Naive thymus-derived CD4-positive, alpha-beta T cell (primary cell): ENCODE measurements at regions of chr6 and their contacts with region 1.

Region 1: GRCh38 chr6:31597006-31597405 is 4.2 kb upstream of the NCR3 start:
- DNase-seq: peak in 7 of 9 donors; percentile 68 to 83 (median 79)
- ATAC-seq: peak; percentile 89
- H3K4me3 ChIP-seq: no peak overlapping the region
- H3K4me3 Mint-ChIP-seq: peak overlapping the region in 9 of 10 donors; percentile 38 to 68 (median 55)
- H3K27ac ChIP-seq: peak overlapping the region; percentile 47
- H3K27ac Mint-ChIP-seq: peak overlapping the region; percentile 52 to 95 (median 81)
- H3K4me1 ChIP-seq: peaks cover 34 to 44% of the 10 kb centered on the region in 2 donors
- H3K4me1 Mint-ChIP-seq: peaks cover 34 to 60% (median 55%) of the 10 kb centered on the region in 7 donors
- H3K27me3 ChIP-seq: no peaks in the 10 kb centered on the region
- H3K27me3 Mint-ChIP-seq: no peaks in the 10 kb centered on the region

Region 2: GRCh38 chr6:31396422-31397152 is 200.4 kb before region 1 on chr6:
- CTCF ChIA-PET with region 1: no interaction called
- POLR2A ChIA-PET with region 1: no interaction called
- intact Hi-C with region 1: loop called (anchors 2 to 5 kb)
- DNase-seq: peak; percentile 70 to 90 (median 84)
- ATAC-seq: peak; percentile 87
- H3K4me3 ChIP-seq: no peak overlapping the region
- H3K4me3 Mint-ChIP-seq: peak overlapping the region in 9 of 10 donors; percentile 32 to 86 (median 61)
- H3K27ac ChIP-seq: no peak overlapping the region
- H3K27ac Mint-ChIP-seq: peak overlapping the region in 6 of 9 donors; percentile 19 to 74 (median 42)
- H3K4me1 ChIP-seq: peaks cover 2 to 11% of the 10 kb centered on the region in 2 donors
- H3K4me1 Mint-ChIP-seq: peaks cover 21 to 45% (median 41%) of the 10 kb centered on the region in 7 donors
- H3K27me3 ChIP-seq: no peaks in the 10 kb centered on the region
- H3K27me3 Mint-ChIP-seq: peaks cover 0 to 4% (median 0%) of the 10 kb centered on the region in 5 donors

Region 3: GRCh38 chr6:31493875-31494694 is 102.9 kb before region 1 on chr6:
- CTCF ChIA-PET with region 1: interaction called, 35 read pairs
- POLR2A ChIA-PET with region 1: interaction called, 6 read pairs
- intact Hi-C with region 1: loop called (anchors 1 to 2 kb)
- DNase-seq: peak; percentile 33 to 78 (median 62)
- ATAC-seq: peak; percentile 65
- H3K4me3 ChIP-seq: peak overlapping the region; percentile 87
- H3K4me3 Mint-ChIP-seq: peak overlapping the region; percentile 78 to 93 (median 88)
- H3K27ac ChIP-seq: peak overlapping the region; percentile 81
- H3K27ac Mint-ChIP-seq: peak overlapping the region; percentile 36 to 98 (median 87)
- H3K4me1 ChIP-seq: peaks cover 17 to 24% of the 10 kb centered on the region in 2 donors
- H3K4me1 Mint-ChIP-seq: peaks cover 41 to 61% (median 50%) of the 10 kb centered on the region in 7 donors
- H3K27me3 ChIP-seq: no peaks in the 10 kb centered on the region
- H3K27me3 Mint-ChIP-seq: no peaks in the 10 kb centered on the region

Region 4: GRCh38 chr6:31546962-31547726 is 49.9 kb before region 1 on chr6 and contains the start of gene NFKBIL1:
- CTCF ChIA-PET with region 1: interaction called, 501 read pairs
- POLR2A ChIA-PET with region 1: interaction called, 3,078 read pairs
- intact Hi-C with region 1: loop called (anchors 1 kb)
- DNase-seq: peak; percentile 53 to 90 (median 84)
- ATAC-seq: peak; percentile 91
- H3K4me3 ChIP-seq: peak within 1 kb of the TSS; percentile 68
- H3K4me3 Mint-ChIP-seq: peak within 1 kb of the TSS; percentile 81 to 97 (median 91)
- H3K27ac ChIP-seq: peak within 1 kb of the TSS; percentile 89
- H3K27ac Mint-ChIP-seq: peak within 1 kb of the TSS; percentile 78 to 98 (median 95)
- H3K4me1 ChIP-seq: peaks cover 22 to 31% of the 10 kb centered on the region in 2 donors
- H3K4me1 Mint-ChIP-seq: peaks cover 22 to 57% (median 48%) of the 10 kb centered on the region in 7 donors
- H3K27me3 ChIP-seq: no peaks in the 10 kb centered on the region
- H3K27me3 Mint-ChIP-seq: no peaks in the 10 kb centered on the region
- total RNA-seq, gene NFKBIL1: 8.7 to 17.2 (median 11.6) TPM

Region 5: GRCh38 chr6:31568537-31568961 is 28.5 kb before region 1 on chr6:
- CTCF ChIA-PET with region 1: interaction called, 687 read pairs
- POLR2A ChIA-PET with region 1: interaction called, 3,078 read pairs
- intact Hi-C with region 1: no loop called
- DNase-seq: peak in 7 of 9 donors; percentile 58 to 84 (median 68)
- ATAC-seq: peak; percentile 82
- H3K4me3 ChIP-seq: peak overlapping the region; percentile 23
- H3K4me3 Mint-ChIP-seq: peak overlapping the region; percentile 39 to 77 (median 68)
- H3K27ac ChIP-seq: peak overlapping the region; percentile 77
- H3K27ac Mint-ChIP-seq: peak overlapping the region; percentile 84 to 99 (median 94)
- H3K4me1 ChIP-seq: peaks cover 55 to 58% of the 10 kb centered on the region in 2 donors
- H3K4me1 Mint-ChIP-seq: peaks cover 57 to 88% (median 77%) of the 10 kb centered on the region in 7 donors
- H3K27me3 ChIP-seq: no peaks in the 10 kb centered on the region
- H3K27me3 Mint-ChIP-seq: peaks cover 0 to 41% (median 0%) of the 10 kb centered on the region in 5 donors

Region 6: DNA sequence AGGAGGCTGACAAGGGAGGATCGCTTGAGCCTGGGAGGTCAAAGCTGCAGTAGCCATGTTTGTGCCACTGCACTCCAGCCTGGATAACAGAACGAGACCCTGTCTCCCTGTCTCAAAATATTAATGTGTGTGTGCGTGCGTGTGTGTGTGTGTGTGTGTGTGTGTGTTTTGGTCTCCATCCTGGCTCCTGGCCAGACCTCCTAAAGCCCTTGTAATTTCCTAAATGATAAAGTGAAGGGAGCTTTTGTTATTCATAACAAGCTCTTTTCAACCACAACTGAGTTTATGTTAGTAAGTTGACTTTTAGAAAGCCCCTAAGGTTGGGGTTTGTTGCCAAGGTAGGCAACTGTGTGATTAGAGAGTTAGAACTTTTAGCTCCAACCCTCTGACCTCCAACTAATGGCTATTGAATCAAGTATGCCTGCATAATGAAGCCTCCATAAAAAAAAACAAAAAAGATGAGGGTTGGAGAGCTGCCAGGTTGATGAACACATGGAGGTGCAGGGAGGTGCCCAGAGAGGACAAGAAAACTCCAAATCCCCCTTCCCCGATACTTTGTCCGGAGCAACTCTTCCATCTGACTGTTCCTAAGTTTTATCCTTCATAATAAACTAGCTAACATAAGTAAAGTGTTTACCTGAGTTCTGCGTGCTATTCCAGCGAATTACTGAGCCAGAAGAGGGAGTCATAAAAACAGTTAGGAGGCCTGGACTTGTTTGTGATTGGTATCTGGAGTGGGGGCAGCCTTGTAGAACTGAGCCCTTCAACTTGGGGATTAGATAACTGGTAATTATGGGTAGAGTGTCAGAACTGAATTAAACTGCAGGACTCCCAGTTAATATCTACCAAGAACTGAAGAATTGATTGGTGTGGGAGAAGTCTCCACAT is 12.8 kb after region 1 on chr6:
- CTCF ChIA-PET with region 1: interaction called, 26 read pairs
- POLR2A ChIA-PET with region 1: interaction called, 26 read pairs
- intact Hi-C with region 1: no loop called
- DNase-seq: no peak
- ATAC-seq: no peak
- H3K4me3 ChIP-seq: no peak overlapping the region
- H3K4me3 Mint-ChIP-seq: no peak overlapping the region
- H3K27ac ChIP-seq: no peak overlapping the region
- H3K27ac Mint-ChIP-seq: peak overlapping the region in 2 of 9 donors; percentile 41 to 45
- H3K4me1 ChIP-seq: peaks cover 0 to under 1% of the 10 kb centered on the region in 2 donors
- H3K4me1 Mint-ChIP-seq: peaks cover 4 to 14% (median 8%) of the 10 kb centered on the region in 7 donors
- H3K27me3 ChIP-seq: no peaks in the 10 kb centered on the region
- H3K27me3 Mint-ChIP-seq: peaks cover 0 to 3% (median 0%) of the 10 kb centered on the region in 5 donors

Region 7: GRCh38 chr6:31827286-31828079 is 230.5 kb after region 1 on chr6 and contains the start of gene HSPA1B:
- CTCF ChIA-PET with region 1: interaction called, 9 read pairs
- POLR2A ChIA-PET with region 1: interaction called, 4 read pairs
- intact Hi-C with region 1: loop called in 1 of 2 experiments (anchors 1 kb)
- DNase-seq: peak; percentile 55 to 96 (median 82)
- ATAC-seq: peak; percentile 80
- H3K4me3 ChIP-seq: peak within 1 kb of the TSS; percentile 74
- H3K4me3 Mint-ChIP-seq: peak within 1 kb of the TSS; percentile 85 to 97 (median 90)
- H3K27ac ChIP-seq: peak within 1 kb of the TSS; percentile 72
- H3K27ac Mint-ChIP-seq: peak within 1 kb of the TSS; percentile 93 to 99 (median 97)
- H3K4me1 ChIP-seq: peaks cover 12 to 17% of the 10 kb centered on the region in 2 donors
- H3K4me1 Mint-ChIP-seq: peaks cover 11 to 51% (median 46%) of the 10 kb centered on the region in 7 donors
- H3K27me3 ChIP-seq: no peaks in the 10 kb centered on the region
- H3K27me3 Mint-ChIP-seq: no peaks in the 10 kb centered on the region
- total RNA-seq, gene HSPA1B: 8.6 to 68.9 (median 28.9) TPM